ENCODE measurements at regions of chr12 and their contacts with region 1.

Region 1: GRCh38 chr12:2877047-2877952 is at the starts of genes FOXM1 and RHNO1:
- DNase-seq: peak; percentile 91 to 98 (median 95)

Region 2: DNA sequence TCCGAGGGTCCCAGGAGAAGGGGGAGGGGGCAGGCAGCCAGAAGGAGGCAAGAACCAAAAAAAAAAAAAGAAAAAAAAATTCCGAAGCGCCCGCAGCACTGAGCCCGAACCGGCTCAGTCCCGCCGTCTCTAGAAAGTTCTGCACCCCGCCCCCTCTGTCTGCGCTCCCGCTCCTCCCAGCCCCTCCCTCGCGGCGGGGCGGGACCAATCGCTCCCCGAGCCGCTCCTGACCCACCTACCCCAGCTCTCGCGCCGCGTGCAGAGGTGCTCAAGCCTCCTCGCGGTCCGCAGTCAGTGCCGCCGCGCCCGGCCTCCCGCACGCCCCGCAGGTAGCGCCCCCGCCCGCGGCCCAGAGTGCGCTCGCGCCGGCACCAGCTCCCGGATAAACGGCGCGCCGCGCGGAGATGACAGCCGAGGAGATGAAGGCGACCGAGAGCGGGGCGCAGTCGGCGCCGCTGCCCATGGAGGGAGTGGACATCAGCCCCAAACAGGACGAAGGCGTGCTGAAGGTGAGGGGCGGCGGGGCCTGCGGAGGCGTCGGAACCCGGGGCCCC is 82.5 kb before region 1 on chr12 and contains the start of gene FKBP4:
- intact Hi-C with region 1: loop called (anchors 10 kb)
- DNase-seq: peak; percentile 82 to 99 (median 96)

Region 3: DNA sequence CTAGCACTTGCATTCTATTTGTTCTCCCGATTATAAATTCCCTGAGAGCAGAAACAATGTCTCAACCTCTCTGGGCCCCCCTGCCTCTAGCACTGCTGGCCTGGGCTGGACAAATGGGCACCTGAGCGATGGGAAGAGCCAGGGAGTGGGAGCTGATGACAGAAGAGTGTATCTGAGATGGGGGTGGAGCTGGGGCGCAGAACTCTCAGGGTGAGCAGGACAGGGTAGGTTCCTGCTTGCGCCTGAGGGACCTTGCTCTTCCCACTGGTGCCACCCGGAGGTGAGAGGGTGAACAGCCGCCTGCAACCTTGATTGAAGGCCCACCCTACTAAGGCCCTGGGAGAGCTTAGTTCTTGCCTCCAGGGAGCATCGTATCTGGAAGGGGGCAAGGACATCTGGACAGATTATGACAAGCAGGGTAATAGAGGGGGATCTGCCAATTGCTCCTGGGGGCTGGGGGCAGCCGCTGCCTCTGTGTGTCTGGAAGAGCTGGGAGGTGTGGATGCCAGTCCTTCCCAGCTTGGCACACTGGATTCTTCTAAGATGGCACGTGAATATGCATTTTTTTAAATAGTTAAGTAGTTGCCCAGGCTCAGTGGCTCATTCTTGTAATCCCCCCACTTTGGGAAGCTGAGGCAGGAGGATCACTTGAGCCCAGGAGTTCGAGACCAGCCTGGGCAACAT is 156.9 kb after region 1 on chr12:
- intact Hi-C with region 1: loop called (anchors 10 kb)
- DNase-seq: peak; percentile 55 to 91 (median 80)

Measured in head of caudate nucleus (tissue), 42 donors.